ENCODE measurements at regions of chr14 and their contacts with region 1.

Region 1: GRCh38 chr14:100654814-100655740 is 67.9 kb upstream of the BEGAIN start:
- DNase-seq: peak; percentile 67 to 79 (median 72)
- ATAC-seq: peak; percentile 82
- H3K4me3 ChIP-seq: no peak overlapping the region
- H3K4me1 ChIP-seq: no peaks in the 10 kb centered on the region
- CTCF ChIP-seq: peak; percentile 85

Region 2: DNA sequence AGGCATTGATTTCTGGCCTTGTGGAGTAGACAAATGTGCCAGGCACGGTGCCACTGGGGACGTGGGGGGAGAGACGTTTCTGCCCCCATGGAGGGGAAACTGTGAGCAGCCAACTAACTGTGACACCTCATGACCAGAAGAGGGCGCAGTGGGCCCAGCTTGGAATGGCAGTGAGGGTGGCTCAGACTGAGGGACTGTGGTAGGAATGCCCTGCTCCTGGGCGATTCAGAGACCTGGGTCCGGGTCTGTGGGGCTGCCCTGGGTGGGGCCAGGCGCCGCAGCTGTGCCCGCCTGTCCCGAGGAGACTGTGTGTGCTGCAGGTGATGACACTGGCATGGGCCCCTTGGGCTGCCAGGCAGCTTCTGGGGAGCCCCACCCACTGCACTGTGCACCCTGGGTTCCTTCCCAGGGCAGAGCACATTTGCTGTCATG is 271.3 kb before region 1 on chr14:
- intact Hi-C with region 1: loop called in 1 of 2 experiments (anchors 5 kb)
- DNase-seq: peak; percentile 63 to 77 (median 74)
- ATAC-seq: peak; percentile 84
- H3K4me3 ChIP-seq: no peak overlapping the region
- H3K4me1 ChIP-seq: peaks cover 12% of the 10 kb centered on the region
- CTCF ChIP-seq: peak; percentile 65

Region 3: DNA sequence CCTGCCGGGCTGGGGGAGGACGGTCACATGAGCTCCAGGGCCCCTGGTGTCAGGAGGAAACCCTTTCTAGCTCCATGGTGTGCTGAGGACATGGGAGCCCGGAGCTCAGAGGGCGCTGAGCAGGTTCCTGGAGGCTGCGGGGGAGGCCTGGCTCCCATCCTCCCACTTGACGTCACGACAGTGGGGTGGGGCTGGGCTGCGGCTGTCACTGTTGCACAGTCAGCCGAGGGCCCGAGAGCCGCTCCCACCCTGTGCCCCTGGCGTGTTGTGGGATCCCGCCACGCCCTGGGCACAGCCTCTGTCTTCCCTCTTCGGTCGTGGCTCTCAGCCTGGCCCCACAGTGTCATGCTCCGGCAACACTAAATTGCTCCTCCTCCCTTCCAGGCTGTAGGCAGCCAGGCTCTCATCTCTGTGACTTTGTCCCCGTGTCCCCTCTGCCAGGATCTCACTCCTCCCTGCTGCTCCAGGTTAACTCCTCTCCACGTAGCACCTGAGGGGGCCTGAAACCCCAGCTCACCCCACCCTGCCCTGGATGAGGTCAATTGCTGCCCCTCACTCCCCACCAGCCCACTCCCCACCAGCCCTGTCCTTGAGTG is 100.9 kb before region 1 on chr14:
- intact Hi-C with region 1: no loop called
- DNase-seq: peak; percentile 74 to 89 (median 87)
- ATAC-seq: peak; percentile 83
- H3K4me3 ChIP-seq: no peak overlapping the region
- H3K4me1 ChIP-seq: peaks cover 10% of the 10 kb centered on the region
- CTCF ChIP-seq: no peak

Region 4: GRCh38 chr14:100605706-100606686 is 49.1 kb before region 1 on chr14:
- intact Hi-C with region 1: no loop called
- DNase-seq: peak in 1 of 3 donors; percentile 9
- ATAC-seq: no peak
- H3K4me3 ChIP-seq: no peak overlapping the region
- H3K4me1 ChIP-seq: no peaks in the 10 kb centered on the region
- CTCF ChIP-seq: no peak

Measured in mucosa of descending colon (tissue), 3 donors.